ENCODE measurements at regions of chr19 and their contacts with region 1.

Region 1: GRCh38 chr19:13794757-13795589 is at the start of gene ZSWIM4:
- DNase-seq: peak; percentile 98 to 99
- ATAC-seq: peak; percentile 95 to 98 (median 97)
- H3K4me3 ChIP-seq: peak within 1 kb of the TSS; percentile 62 to 96 (median 73)
- H3K27ac ChIP-seq: peak within 1 kb of the TSS; percentile 83 to 94 (median 91)
- H3K4me1 ChIP-seq: peaks cover 16 to 36% (median 30%) of the 10 kb centered on the region in 9 donors
- H3K27me3 ChIP-seq: no peaks in the 10 kb centered on the region
- CTCF ChIP-seq: no peak
- total RNA-seq, gene ZSWIM4: 2.1 to 7.1 (median 3.0) TPM

Region 2: DNA sequence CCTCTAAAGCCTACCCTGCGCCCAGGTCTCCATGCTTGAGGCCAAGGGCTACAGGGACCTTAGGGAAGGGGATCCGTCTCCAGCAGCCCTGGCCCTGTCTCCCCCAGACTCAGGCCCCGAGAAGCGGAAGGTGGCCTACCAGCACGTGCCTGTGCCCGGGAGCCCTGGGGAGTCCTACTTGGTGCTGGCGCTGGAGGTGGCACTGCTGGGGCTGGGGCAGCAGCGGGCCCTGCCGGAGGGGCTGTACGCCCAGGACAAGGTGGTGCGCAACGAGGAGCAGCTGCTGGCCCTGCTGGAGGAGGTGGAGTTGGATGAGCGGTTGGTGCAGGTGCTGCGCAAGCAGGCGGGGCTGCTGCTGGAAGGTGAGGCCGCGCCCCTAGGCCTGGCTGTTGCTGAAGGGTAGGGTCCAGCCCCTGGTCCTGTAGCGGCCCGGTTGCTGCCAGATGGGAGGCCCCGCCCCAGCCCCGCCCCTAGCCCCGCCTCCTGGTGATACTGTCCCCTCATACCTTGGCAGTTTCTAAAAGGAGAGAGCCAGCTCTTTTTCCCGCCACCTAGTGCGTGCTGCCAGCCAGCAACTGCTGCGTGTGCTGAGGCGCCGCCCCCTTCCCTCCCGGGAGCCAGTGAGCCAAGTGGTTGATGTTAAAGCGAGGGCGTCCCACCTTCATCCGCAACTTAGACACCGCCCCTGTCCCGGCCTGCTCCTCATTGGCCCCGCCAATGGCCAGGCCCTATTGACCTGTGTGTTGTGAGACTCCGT is 22.8 kb after region 1 on chr19:
- intact Hi-C with region 1: no loop called
- DNase-seq: no peak
- ATAC-seq: peak; percentile 3 to 59 (median 34)
- H3K4me3 ChIP-seq: peak overlapping the region in 5 of 10 donors; percentile 3 to 29 (median 27)
- H3K27ac ChIP-seq: no peak overlapping the region
- H3K4me1 ChIP-seq: peaks cover 0 to 16% (median 6%) of the 10 kb centered on the region in 9 donors
- H3K27me3 ChIP-seq: no peaks in the 10 kb centered on the region
- CTCF ChIP-seq: no peak

Region 3: DNA sequence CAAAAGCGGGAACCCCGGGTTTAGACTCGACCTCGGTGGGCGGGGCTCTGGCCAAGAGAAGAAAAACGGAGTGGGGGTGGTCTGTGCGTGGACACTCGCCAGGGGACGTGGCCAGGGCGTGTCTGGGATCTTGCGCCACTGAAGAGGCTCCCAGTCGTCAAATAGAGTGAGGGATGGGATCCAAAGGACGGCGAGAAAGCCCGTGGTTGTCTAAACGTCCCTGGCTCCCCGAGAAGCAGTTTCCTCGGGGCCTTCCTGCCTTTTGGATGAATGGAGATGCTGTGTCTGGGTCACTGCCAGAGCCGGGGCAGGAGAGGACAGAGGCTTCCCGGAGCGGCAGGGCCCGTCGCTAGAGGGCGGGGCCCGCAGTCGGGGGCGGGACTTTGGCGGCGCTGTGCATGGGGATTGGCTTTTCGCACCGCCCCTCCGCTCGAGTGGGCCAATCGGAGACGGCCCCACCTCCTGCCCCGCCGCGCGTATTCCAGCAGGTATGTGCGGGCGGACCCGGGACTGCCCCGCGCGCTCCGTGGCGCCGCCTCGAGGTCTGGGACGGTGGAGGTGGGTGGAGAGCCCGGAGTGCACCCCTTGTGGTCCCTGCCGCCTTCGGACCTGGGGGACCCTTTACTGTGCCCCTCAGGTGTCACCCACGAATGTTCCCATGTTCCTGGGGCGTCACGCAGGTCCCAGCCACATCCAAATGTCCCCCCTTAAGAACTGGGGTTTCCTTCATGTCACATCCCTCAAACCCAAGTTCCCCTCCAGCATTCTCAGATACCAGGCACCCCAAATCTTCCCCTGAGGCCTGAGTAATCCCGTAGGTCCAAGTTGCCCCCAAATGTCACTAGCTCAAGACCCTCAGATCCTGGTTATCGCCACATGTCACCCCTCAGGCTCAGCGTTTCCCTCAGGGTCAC is 38.6 kb after region 1 on chr19:
- intact Hi-C with region 1: loop called in 5 of 10 experiments (anchors 5 kb)
- DNase-seq: peak; percentile 96 to 97
- ATAC-seq: peak; percentile 78 to 93 (median 84)
- H3K4me3 ChIP-seq: peak overlapping the region in 5 of 10 donors; percentile 5 to 38 (median 22)
- H3K27ac ChIP-seq: peak overlapping the region; percentile 1 to 100 (median 100)
- H3K4me1 ChIP-seq: peaks cover 39 to 67% (median 60%) of the 10 kb centered on the region in 9 donors
- H3K27me3 ChIP-seq: no peaks in the 10 kb centered on the region
- CTCF ChIP-seq: peak in 7 of 9 donors; percentile 26 to 63 (median 48)

Region 4: GRCh38 chr19:13839130-13839937 is 44.4 kb after region 1 on chr19:
- intact Hi-C with region 1: loop called in 5 of 10 experiments (anchors 5 kb)
- DNase-seq: peak; percentile 93 to 94
- ATAC-seq: peak; percentile 57 to 76 (median 70)
- H3K4me3 ChIP-seq: peak overlapping the region; percentile 76 to 100 (median 96)
- H3K27ac ChIP-seq: peak overlapping the region; percentile 99 to 100 (median 100)
- H3K4me1 ChIP-seq: peaks cover 41 to 83% (median 64%) of the 10 kb centered on the region in 9 donors
- H3K27me3 ChIP-seq: no peaks in the 10 kb centered on the region
- CTCF ChIP-seq: peak in 4 of 9 donors; percentile 8 to 29 (median 27)

Region 5: GRCh38 chr19:13932911-13933393 is 138.0 kb after region 1 on chr19:
- intact Hi-C with region 1: no loop called
- DNase-seq: no peak
- ATAC-seq: peak in 1 of 8 donors; percentile 18
- H3K4me3 ChIP-seq: no peak overlapping the region
- H3K27ac ChIP-seq: no peak overlapping the region
- H3K4me1 ChIP-seq: peaks cover 0 to 5% (median 0%) of the 10 kb centered on the region in 9 donors
- H3K27me3 ChIP-seq: peaks cover 0 to 25% (median 18%) of the 10 kb centered on the region in 7 donors
- CTCF ChIP-seq: no peak